Dorsolateral prefrontal cortex (tissue), 120 donors: ENCODE measurements at regions of chr9 and their contacts with region 1.

Region 1: GRCh38 chr9:35814841-35815543 is at the start of gene HINT2:
- DNase-seq: peak; percentile 87 to 98 (median 96)
- H3K4me3 ChIP-seq: peak within 1 kb of the TSS; percentile 58 to 100 (median 93)
- H3K27ac ChIP-seq: peak within 1 kb of the TSS; percentile 83 to 100 (median 98)
- H3K27me3 ChIP-seq: no peaks in the 10 kb centered on the region
- CTCF ChIP-seq: peak in 12 of 56 donors; percentile 2 to 31 (median 12)
- total RNA-seq, gene HINT2: 16.1 to 49.1 (median 32.2) TPM

Region 2: DNA sequence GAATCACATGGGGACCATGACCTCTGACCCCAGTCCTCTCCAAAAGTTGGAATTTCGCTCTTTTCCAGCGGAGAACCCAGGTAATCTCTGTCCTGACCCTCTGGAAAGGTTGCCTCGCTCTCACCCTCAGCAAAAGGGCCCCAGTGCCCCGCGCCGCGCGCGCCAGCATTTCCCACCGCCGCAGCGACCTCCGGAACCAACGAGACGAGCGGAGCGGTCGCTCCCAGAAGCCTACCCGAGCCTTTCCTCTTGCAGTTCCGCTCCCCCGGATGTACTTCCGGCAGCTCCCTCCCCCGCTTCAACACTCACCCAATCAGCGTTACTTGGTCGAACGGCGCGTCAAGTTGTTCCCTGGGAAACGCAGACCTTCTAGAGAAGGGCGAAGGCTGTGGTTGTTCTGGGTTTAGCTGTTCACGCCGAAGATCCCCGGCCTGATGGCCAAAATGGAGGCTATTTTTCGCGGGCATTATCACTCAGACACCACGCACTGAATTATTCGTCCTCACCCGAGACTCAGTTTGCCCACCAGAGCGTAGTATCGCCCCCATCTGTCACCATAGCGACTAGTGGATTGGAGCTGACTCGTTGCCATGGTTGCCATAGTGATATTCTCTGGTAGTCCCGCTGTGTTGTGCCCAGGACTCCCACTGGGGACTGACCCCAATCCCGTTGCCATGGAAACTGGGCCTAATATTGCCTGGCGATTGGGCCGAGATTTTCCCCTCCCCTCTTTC is 711.9 kb before region 1 on chr9 and contains the start of gene STOML2:
- intact Hi-C with region 1: loop called in 1 of 2 experiments (anchors 5 kb)
- DNase-seq: peak; percentile 93 to 98 (median 96)
- H3K4me3 ChIP-seq: peak within 1 kb of the TSS; percentile 53 to 98 (median 83)
- H3K27ac ChIP-seq: peak within 1 kb of the TSS in 58 of 59 donors; percentile 50 to 97 (median 84)
- H3K27me3 ChIP-seq: no peaks in the 10 kb centered on the region
- CTCF ChIP-seq: peak in 40 of 56 donors; percentile 5 to 65 (median 38)
- total RNA-seq, gene STOML2: 36.9 to 78.5 (median 61.0) TPM

Region 3: GRCh38 chr9:35646533-35647265 is 168.3 kb before region 1 on chr9:
- intact Hi-C with region 1: loop called in 1 of 2 experiments (anchors 5 kb)
- DNase-seq: peak; percentile 84 to 94 (median 90)
- H3K4me3 ChIP-seq: peak overlapping the region; percentile 47 to 90 (median 73)
- H3K27ac ChIP-seq: peak overlapping the region; percentile 54 to 96 (median 86)
- H3K27me3 ChIP-seq: no peaks in the 10 kb centered on the region
- CTCF ChIP-seq: peak; percentile 79 to 99 (median 97)

Region 4: GRCh38 chr9:35657546-35658136 is 157.4 kb before region 1 on chr9 and contains the start of gene RMRP:
- intact Hi-C with region 1: loop called in 1 of 2 experiments (anchors 5 kb)
- DNase-seq: peak; percentile 93 to 99 (median 98)
- H3K4me3 ChIP-seq: peak within 1 kb of the TSS; percentile 61 to 99 (median 93)
- H3K27ac ChIP-seq: peak within 1 kb of the TSS; percentile 80 to 100 (median 98)
- H3K27me3 ChIP-seq: no peaks in the 10 kb centered on the region
- CTCF ChIP-seq: peak in 50 of 56 donors; percentile 17 to 65 (median 45)
- total RNA-seq, gene RMRP: 532 to 8,708 (median 3,979) TPM

Region 5: DNA sequence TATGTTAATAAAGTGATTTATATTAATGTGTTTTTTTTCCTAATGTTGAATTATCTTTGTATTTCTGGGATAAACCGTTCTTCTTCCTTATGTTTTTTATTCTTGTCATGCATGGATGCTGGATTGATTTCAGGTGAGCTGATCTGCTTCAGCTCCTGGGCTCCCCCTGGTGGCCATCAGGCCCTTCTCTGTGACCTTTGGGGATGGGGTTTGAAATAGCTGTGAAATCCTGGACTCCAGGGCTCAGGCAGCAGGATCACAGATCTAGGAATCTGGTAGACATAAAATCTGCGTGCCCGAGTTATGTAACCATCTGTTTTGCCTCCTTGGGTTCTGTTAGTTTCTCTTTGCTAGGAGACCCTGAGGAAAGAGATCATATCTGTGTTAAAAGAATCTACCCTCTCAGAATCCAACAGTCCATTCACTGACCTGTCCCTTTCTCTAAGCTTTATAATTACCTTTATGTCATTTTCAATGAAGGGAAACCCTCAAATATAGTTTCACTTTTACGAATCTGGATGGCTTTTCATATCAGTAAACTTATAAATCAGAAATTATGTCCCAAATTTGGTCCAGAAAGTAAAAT is 67.4 kb after region 1 on chr9:
- intact Hi-C with region 1: loop called in 1 of 2 experiments (anchors 5 kb)
- DNase-seq: peak; percentile 68 to 93 (median 84)
- H3K4me3 ChIP-seq: no peak overlapping the region
- H3K27ac ChIP-seq: peak overlapping the region in 6 of 59 donors; percentile 2 to 16 (median 10)
- H3K27me3 ChIP-seq: no peaks in the 10 kb centered on the region
- CTCF ChIP-seq: peak; percentile 80 to 99 (median 97)